ENCODE measurements at regions of chr2 and their contacts with region 1.

Region 1: GRCh38 chr2:209423562-209424198 is at the start of gene MAP2:
- DNase-seq: peak; percentile 38 to 40
- ATAC-seq: peak; percentile 77 to 81
- H3K4me3 ChIP-seq: peak within 1 kb of the TSS; percentile 59 to 69 (median 62)
- H3K27ac ChIP-seq: peak within 1 kb of the TSS; percentile 32 to 62 (median 42)
- H3K4me1 ChIP-seq: peaks cover 2 to 6% of the 10 kb centered on the region in 2 donors
- H3K27me3 ChIP-seq: no peaks in the 10 kb centered on the region
- CTCF ChIP-seq: peak; percentile 60 to 88 (median 77)
- POLR2A ChIP-seq: peak; percentile 47 to 61
- total RNA-seq, gene MAP2: 1.8 to 2.7 (median 2.2) TPM

Region 2: DNA sequence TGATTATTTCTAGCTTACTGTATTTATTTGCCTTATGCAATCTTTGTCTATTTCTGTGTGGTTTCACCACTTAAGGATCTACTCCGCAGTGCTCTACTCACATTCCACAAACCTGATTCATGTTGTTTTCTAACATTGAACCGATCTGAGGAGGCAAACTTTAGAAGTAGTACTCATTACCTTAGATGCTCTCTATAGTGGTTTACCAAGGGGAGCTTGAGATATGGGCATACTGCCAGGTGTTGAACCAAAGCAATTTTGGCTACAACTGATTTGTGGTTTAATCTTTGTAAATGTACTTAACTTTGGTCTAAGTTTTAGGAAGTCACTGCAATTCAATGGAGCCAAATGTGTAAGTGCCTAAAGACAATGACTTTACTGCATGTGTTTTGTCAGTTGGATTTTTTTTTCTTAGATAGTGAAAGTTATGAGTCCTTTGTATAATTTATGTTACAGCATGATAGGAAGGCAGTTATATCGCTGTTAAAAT is 50.3 kb after region 1 on chr2:
- in situ Hi-C with region 1: no loop called
- intact Hi-C with region 1: loop called (anchors 10 kb)
- DNase-seq: no peak
- ATAC-seq: no peak
- H3K4me3 ChIP-seq: no peak overlapping the region
- H3K27ac ChIP-seq: no peak overlapping the region
- H3K4me1 ChIP-seq: peaks cover 0 to 10% of the 10 kb centered on the region in 2 donors
- H3K27me3 ChIP-seq: no peaks in the 10 kb centered on the region
- CTCF ChIP-seq: no peak
- POLR2A ChIP-seq: no peak

Region 3: GRCh38 chr2:209495855-209496585 is 72.3 kb after region 1 on chr2:
- in situ Hi-C with region 1: no loop called
- intact Hi-C with region 1: loop called (anchors 1 kb)
- DNase-seq: no peak
- ATAC-seq: peak; percentile 91 to 93
- H3K4me3 ChIP-seq: no peak overlapping the region
- H3K27ac ChIP-seq: peak overlapping the region; percentile 70 to 79 (median 75)
- H3K4me1 ChIP-seq: peaks cover 0 to 12% of the 10 kb centered on the region in 2 donors
- H3K27me3 ChIP-seq: no peaks in the 10 kb centered on the region
- CTCF ChIP-seq: no peak
- POLR2A ChIP-seq: no peak

Region 4: GRCh38 chr2:209556354-209556961 is 132.8 kb after region 1 on chr2:
- in situ Hi-C with region 1: no loop called
- intact Hi-C with region 1: loop called (anchors 2 kb)
- DNase-seq: no peak
- ATAC-seq: no peak
- H3K4me3 ChIP-seq: no peak overlapping the region
- H3K27ac ChIP-seq: no peak overlapping the region
- H3K4me1 ChIP-seq: no peaks in the 10 kb centered on the region
- H3K27me3 ChIP-seq: no peaks in the 10 kb centered on the region
- CTCF ChIP-seq: peak in 2 of 5 experiments; percentile 36 to 38
- POLR2A ChIP-seq: no peak